ENCODE measurements at regions of chr6 and their contacts with region 1.

Region 1: DNA sequence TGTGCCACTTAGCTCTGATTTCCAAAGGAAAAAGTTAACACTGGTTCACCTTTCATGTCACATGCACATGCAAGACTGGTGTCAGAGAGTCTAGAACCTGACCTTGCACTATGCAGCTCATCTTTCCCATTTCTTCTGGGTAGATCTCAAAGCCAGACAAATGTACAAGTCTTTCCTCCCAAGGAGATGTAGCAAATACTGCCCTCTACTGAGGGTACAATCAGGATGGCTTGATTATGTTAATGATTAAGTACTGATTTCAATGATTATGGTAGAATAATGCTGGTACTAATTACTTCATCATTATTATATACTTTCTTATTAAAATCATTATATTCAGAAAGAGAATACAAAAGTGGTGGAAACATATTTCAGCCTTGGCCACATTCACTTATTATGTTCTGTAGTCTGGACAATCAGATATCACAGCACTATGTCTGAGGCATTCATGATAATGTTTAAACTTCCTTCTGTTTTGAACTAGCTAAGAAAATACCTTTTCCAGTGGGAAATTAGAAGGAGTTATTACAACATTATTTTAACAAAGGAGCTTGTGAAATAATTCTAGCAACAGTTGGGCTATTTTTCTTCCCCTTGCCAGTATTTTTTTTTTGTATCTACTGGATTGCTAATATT is 68.5 kb upstream of the FOXO3 start:
- DNase-seq: peak; percentile 7
- H3K4me3 ChIP-seq: no peak overlapping the region
- H3K27me3 ChIP-seq: no peaks in the 10 kb centered on the region
- CTCF ChIP-seq: peak; percentile 63

Region 2: GRCh38 chr6:107982486-107982885 is 509.8 kb before region 1 on chr6:
- CTCF ChIA-PET with region 1: interaction called, 19 read pairs
- POLR2A ChIA-PET with region 1: no interaction called
- DNase-seq: no peak
- H3K4me3 ChIP-seq: no peak overlapping the region
- H3K27me3 ChIP-seq: no peaks in the 10 kb centered on the region
- CTCF ChIP-seq: no peak

Region 3: DNA sequence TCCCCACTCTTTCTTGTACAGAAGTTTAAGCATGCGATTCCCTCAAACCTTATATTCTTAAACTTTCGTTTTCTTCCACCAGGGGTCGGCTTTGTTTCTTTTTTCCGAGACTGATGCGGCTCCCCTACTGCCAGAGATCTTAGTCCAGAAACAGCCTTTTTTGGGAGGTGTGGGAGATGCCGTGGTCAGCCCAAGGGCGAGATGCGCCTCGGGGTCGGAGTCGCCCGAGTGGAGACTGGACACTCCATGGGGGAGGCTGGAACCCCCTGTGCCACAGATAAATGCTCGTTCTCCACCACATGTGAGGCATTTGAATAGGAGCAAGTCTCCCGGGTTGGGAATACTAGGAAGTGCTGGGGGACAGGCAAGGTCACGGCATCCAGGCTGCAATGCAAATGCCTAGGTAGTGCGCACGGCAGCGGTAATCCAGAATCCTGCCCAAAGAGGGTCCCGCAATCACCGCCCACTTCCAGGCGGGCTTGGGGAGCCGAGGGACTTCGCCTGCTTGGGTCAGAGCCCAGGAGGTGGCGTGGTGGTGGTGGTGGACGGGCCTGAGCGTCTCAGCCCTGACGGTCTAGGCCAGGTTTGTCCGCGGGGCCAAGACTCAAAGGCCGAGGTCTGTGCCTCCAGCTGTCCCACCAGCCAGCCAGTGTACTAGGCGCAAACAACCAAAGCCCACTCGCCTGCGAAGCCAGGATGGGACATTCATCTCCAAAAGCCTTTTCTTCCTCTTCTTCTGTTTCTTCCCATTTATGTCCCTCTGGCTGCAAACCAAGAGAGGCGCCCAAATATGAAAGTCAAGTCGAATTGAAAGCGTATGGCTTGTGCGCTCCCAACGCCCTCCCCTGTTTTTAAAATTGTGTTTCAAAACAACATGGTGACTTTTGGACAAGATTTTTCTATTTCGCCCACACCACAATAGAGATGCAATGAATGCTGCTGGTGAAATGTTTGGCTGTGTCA is 378.4 kb before region 1 on chr6:
- CTCF ChIA-PET with region 1: interaction called, 58 read pairs
- POLR2A ChIA-PET with region 1: no interaction called
- DNase-seq: no peak
- H3K4me3 ChIP-seq: 0 out of 2 replicates have a peak overlapping the region, but pooled peaks have one; percentile 10
- H3K27me3 ChIP-seq: peaks cover 44% of the 10 kb centered on the region
- CTCF ChIP-seq: peak; percentile 63

Region 4: GRCh38 chr6:108476847-108477430 is 15.3 kb before region 1 on chr6:
- CTCF ChIA-PET with region 1: interaction called, 32 read pairs
- POLR2A ChIA-PET with region 1: no interaction called
- DNase-seq: no peak
- H3K4me3 ChIP-seq: no peak overlapping the region
- H3K27me3 ChIP-seq: no peaks in the 10 kb centered on the region
- CTCF ChIP-seq: no peak

Measured in BJ (cell line).